Activated CD4-positive, alpha-beta memory T cell treated with anti-CD3 and anti-CD28 coated beads for 36 hours (primary cell): ENCODE measurements at regions of chr3 and their contacts with region 1.

Region 1: GRCh38 chr3:51982782-51983577 is at the start of gene ACY1:
- DNase-seq: peak; percentile 85
- H3K4me3 Mint-ChIP-seq: peak within 1 kb of the TSS; percentile 88
- H3K27ac Mint-ChIP-seq: peak within 1 kb of the TSS; percentile 88
- H3K4me1 Mint-ChIP-seq: peaks cover 28% of the 10 kb centered on the region
- H3K27me3 Mint-ChIP-seq: no peaks in the 10 kb centered on the region
- total RNA-seq, gene ACY1: 53.1 to 59.2 TPM

Region 2: GRCh38 chr3:51519848-51520247 is 463.1 kb before region 1 on chr3:
- CTCF ChIA-PET with region 1: no interaction called
- POLR2A ChIA-PET with region 1: no interaction called
- intact Hi-C with region 1: no loop called
- DNase-seq: no peak
- H3K4me3 Mint-ChIP-seq: no peak overlapping the region
- H3K27ac Mint-ChIP-seq: no peak overlapping the region
- H3K4me1 Mint-ChIP-seq: no peaks in the 10 kb centered on the region
- H3K27me3 Mint-ChIP-seq: no peaks in the 10 kb centered on the region

Region 3: GRCh38 chr3:51967384-51968169 is 15.4 kb before region 1 on chr3 and contains the start of gene PCBP4:
- CTCF ChIA-PET with region 1: interaction called, 4 read pairs
- POLR2A ChIA-PET with region 1: interaction called, 12 read pairs
- intact Hi-C with region 1: no loop called
- DNase-seq: peak; percentile 45
- H3K4me3 Mint-ChIP-seq: peak within 1 kb of the TSS; percentile 81
- H3K27ac Mint-ChIP-seq: peak within 1 kb of the TSS; percentile 45
- H3K4me1 Mint-ChIP-seq: peaks cover 23% of the 10 kb centered on the region
- H3K27me3 Mint-ChIP-seq: no peaks in the 10 kb centered on the region
- total RNA-seq, gene PCBP4: 17.3 to 19.3 TPM